Activated T-helper 1 cell treated with anti-CD3 and anti-CD28 coated beads, Interleukin-12 subunit alpha, Interleukin-12 subunit beta, Interleukin-2, Interleukin-4 antibody, amounts not matched to agents 30 ng/mL and 10 ng/mL and 1 ng/mL, durations not matched to agents 14 hours and 24 hours and 36 hours (primary cell): ENCODE measurements at regions of chr3 and their contacts with region 1.

Region 1: GRCh38 chr3:129650256-129650872 is 43.9 kb upstream of the PLXND1 start:
- DNase-seq: peak; percentile 20
- H3K4me3 Mint-ChIP-seq: no peak overlapping the region
- H3K27ac Mint-ChIP-seq: no peak overlapping the region
- H3K4me1 Mint-ChIP-seq: peaks cover 5% of the 10 kb centered on the region
- H3K27me3 Mint-ChIP-seq: peaks cover 5% of the 10 kb centered on the region

Region 2: GRCh38 chr3:129855454-129856419 is 205.4 kb after region 1 on chr3:
- intact Hi-C with region 1: no loop called
- DNase-seq: no peak
- H3K4me3 Mint-ChIP-seq: no peak overlapping the region
- H3K27ac Mint-ChIP-seq: no peak overlapping the region
- H3K4me1 Mint-ChIP-seq: peaks cover 8% of the 10 kb centered on the region
- H3K27me3 Mint-ChIP-seq: no peaks in the 10 kb centered on the region

Region 3: GRCh38 chr3:129994883-129995559 is 344.7 kb after region 1 on chr3:
- intact Hi-C with region 1: loop called (anchors 5 kb)
- DNase-seq: no peak
- H3K4me3 Mint-ChIP-seq: no peak overlapping the region
- H3K27ac Mint-ChIP-seq: no peak overlapping the region
- H3K4me1 Mint-ChIP-seq: no peaks in the 10 kb centered on the region
- H3K27me3 Mint-ChIP-seq: peaks cover 19% of the 10 kb centered on the region